ENCODE measurements at regions of chr16 and their contacts with region 1.

Region 1: DNA sequence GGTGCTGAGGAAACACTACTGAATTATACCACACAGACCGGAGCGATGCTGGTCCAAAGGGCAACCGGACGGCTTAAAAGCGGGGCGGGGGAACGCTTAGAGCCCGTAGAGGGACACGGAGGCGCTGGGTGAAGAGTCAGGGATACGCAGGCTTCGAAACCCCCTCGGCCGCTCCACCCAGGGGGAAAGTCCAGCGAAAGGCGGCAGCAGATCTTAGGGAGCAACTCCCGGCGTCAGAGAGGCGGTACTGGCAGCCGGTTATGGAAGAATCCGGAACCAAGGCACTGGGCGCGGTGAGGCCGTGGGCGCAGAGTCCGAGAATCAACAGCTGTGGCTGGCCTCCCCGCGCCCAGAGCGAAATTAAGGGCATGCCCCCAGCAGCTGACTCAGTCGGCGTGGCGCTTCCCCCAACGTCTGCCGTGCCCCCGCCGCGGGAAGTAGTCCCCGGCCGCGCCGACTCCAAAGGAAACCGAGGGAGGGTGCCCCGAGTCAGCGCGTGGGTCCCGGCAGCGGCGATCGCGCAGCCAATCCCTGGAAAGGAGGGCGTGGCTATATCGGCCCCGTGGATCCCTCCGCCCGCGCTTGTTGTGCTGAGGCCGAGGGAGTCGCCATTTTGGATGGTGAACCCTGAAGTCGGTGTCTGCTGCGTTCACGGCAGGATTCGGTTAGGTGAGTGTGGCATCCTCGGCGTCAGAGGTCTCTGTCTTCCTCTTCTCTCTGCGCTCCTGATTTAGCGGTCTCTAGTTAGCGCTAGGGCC is at the start of gene IST1:
- DNase-seq: peak; percentile 91 to 99
- H3K4me3 ChIP-seq: peak within 1 kb of the TSS; percentile 71 to 81
- H3K27ac ChIP-seq: peak within 1 kb of the TSS; percentile 94 to 97
- H3K4me1 ChIP-seq: peaks cover 0 to 32% of the 10 kb centered on the region in 2 donors
- H3K27me3 ChIP-seq: no peaks in the 10 kb centered on the region
- CTCF ChIP-seq: no peak
- total RNA-seq, gene IST1: 116 TPM

Region 2: DNA sequence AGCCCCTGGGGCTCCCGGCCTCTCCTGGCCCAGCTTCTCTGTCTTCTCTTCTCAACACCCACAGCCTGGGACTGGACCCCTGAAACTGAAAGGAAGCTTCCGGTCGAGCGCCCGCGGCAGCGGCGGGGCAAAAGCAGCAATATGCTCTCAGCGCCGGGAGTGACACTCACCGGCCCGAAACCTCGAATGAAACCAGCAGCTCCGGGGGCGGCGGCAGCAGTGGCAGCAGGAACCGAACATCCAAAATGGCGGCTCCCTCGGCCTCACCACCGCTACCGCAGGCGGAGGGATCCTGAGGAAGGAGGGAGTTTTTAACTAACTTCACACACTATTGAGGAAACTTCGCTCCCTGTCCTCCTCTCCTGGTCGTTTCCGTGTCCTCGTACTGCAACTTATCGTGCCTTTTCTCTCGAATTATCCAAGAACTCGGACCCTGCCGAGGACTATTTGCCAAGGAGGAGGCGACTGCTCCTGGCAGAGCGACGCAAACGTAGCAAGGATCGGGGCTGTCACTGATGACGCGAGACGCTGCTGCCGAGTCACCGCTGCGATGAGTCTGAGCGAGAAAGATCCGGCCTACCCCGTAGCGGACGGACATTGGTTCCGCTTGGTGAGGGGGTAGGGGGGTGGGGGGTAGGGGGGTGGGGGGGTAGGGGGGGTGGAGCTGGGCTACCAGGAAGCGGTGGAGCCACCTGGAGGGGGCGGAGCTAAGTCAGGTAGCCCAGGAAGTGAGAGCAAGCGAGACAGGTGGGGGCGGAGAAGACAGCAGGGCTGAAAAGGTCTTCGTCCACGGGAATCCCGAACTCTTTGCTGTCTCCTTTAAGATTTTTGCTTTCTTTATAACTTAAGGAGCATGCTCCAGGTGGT is 86.3 kb before region 1 on chr16 and contains the start of gene AP1G1:
- intact Hi-C with region 1: loop called (anchors 2 kb)
- DNase-seq: peak; percentile 87 to 98
- H3K4me3 ChIP-seq: peak within 1 kb of the TSS; percentile 98 to 99
- H3K27ac ChIP-seq: peak within 1 kb of the TSS; percentile 100
- H3K4me1 ChIP-seq: peaks cover 9 to 24% of the 10 kb centered on the region in 2 donors
- H3K27me3 ChIP-seq: no peaks in the 10 kb centered on the region
- CTCF ChIP-seq: no peak
- total RNA-seq, gene AP1G1: 40.7 TPM

Region 3: GRCh38 chr16:71883849-71884638 is 11.1 kb before region 1 on chr16 and contains the start of gene ZNF821:
- intact Hi-C with region 1: loop called (anchors 1 kb)
- DNase-seq: peak in 1 of 2 donors; percentile 89
- H3K4me3 ChIP-seq: peak within 1 kb of the TSS; percentile 79 to 87
- H3K27ac ChIP-seq: peak within 1 kb of the TSS; percentile 94 to 95
- H3K4me1 ChIP-seq: peaks cover 0 to 4% of the 10 kb centered on the region in 2 donors
- H3K27me3 ChIP-seq: no peaks in the 10 kb centered on the region
- CTCF ChIP-seq: peak; percentile 16 to 45 (median 40)
- total RNA-seq, gene ZNF821: not detected

Region 4: GRCh38 chr16:72008424-72009216 is 113.5 kb after region 1 on chr16 and contains the start of gene DHODH:
- intact Hi-C with region 1: loop called (anchors 1 kb)
- DNase-seq: peak; percentile 95 to 99
- H3K4me3 ChIP-seq: peak within 1 kb of the TSS; percentile 80 to 94
- H3K27ac ChIP-seq: peak within 1 kb of the TSS; percentile 42 to 48
- H3K4me1 ChIP-seq: peaks cover 0 to 2% of the 10 kb centered on the region in 2 donors
- H3K27me3 ChIP-seq: no peaks in the 10 kb centered on the region
- CTCF ChIP-seq: peak in 2 of 3 experiments; percentile 6 to 15
- total RNA-seq, gene DHODH: 8.6 TPM